SK-N-SH (cell line): ENCODE measurements at regions of chr7 and their contacts with region 1.

Region 1: GRCh38 chr7:36291387-36292316 is 98.0 kb upstream of the ANLN start:
- DNase-seq: peak; percentile 93
- H3K4me3 ChIP-seq: peak overlapping the region; percentile 18 to 37; a peak in 3 of 4 replicates
- H3K27ac ChIP-seq: peak overlapping the region in 1 of 2 experiments; percentile 1; a peak in 1 of 4 replicates
- H3K4me1 ChIP-seq: peaks cover 4 to 14% of the 10 kb centered on the region in 2 experiments; a peak in 1 of 4 replicates
- H3K27me3 ChIP-seq: no peaks in the 10 kb centered on the region
- CTCF ChIP-seq: peak; percentile 100
- EP300 ChIP-seq: no peak
- RAD21 ChIP-seq: peak; percentile 100

Region 2: GRCh38 chr7:35985126-35985754 is 306.4 kb before region 1 on chr7:
- CTCF ChIA-PET with region 1: interaction called, 369 read pairs
- POLR2A ChIA-PET with region 1: interaction called, 7 read pairs
- DNase-seq: peak; percentile 96
- H3K4me3 ChIP-seq: no peak overlapping the region; a peak in 1 of 4 replicates
- H3K27ac ChIP-seq: no peak overlapping the region
- H3K4me1 ChIP-seq: no peaks in the 10 kb centered on the region; a peak in 1 of 4 replicates
- H3K27me3 ChIP-seq: no peaks in the 10 kb centered on the region
- CTCF ChIP-seq: peak; percentile 100
- EP300 ChIP-seq: no peak
- RAD21 ChIP-seq: peak; percentile 100

Region 3: DNA sequence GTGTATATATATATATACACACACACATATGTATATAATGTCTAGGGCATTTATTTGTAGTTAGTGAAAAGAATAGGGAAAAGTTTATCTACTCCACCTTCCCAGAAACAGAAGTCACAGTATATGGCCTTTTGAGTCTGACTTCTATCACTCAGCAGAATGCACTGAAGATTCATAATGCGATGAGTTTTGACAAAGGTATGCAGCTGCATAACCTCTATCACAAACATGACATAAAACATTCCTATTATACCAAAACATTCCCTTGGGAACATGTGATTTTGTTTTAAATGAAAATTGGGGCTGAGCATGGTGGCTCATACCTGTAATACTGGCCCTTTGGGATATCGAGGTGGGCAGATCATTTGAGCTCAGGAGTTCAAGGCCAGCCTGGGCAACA is 275.9 kb before region 1 on chr7:
- CTCF ChIA-PET with region 1: interaction called, 19 read pairs
- POLR2A ChIA-PET with region 1: no interaction called
- DNase-seq: no peak
- H3K4me3 ChIP-seq: no peak overlapping the region
- H3K27ac ChIP-seq: no peak overlapping the region
- H3K4me1 ChIP-seq: peaks cover 0 to 5% of the 10 kb centered on the region in 2 experiments; a peak in 1 of 4 replicates
- H3K27me3 ChIP-seq: no peaks in the 10 kb centered on the region
- CTCF ChIP-seq: no peak
- EP300 ChIP-seq: peak in 1 of 2 experiments; percentile 20; a peak in 1 of 4 replicates
- RAD21 ChIP-seq: no peak

Region 4: DNA sequence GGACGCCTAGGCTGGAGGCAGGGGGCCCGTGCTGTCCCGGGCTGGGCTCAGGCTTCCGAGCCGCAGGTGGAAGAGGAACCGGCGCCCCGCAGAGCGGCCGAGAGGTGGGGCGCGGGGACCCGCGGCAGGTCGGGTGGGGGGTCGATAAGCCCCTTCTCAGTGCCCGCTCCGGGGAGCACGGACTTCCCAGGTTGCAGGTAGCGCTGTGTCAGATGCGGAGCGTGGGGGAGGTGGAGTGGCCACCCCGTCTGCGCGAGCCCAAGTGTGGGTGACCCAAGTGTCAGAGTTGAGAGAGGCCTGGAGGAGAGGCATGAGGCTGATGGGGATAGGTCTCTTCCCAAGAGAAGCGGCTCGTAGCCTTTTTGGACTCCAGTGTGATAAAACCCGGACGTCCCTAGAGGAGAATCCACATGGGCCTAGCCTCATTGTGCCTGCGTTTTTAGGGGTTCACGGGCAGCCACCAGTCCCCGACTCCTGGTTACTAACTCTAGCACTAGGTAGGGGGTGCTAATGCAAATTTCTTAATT is 138.0 kb before region 1 on chr7:
- CTCF ChIA-PET with region 1: interaction called, 28 read pairs
- POLR2A ChIA-PET with region 1: no interaction called
- DNase-seq: no peak
- H3K4me3 ChIP-seq: peak overlapping the region; percentile 87 to 93
- H3K27ac ChIP-seq: peak overlapping the region; percentile 56 to 73
- H3K4me1 ChIP-seq: peaks cover 0 to 45% of the 10 kb centered on the region in 2 experiments; a peak in 2 of 4 replicates
- H3K27me3 ChIP-seq: no peaks in the 10 kb centered on the region
- CTCF ChIP-seq: no peak
- EP300 ChIP-seq: no peak
- RAD21 ChIP-seq: no peak

Region 5: GRCh38 chr7:36264123-36264801 is 27.4 kb before region 1 on chr7:
- CTCF ChIA-PET with region 1: interaction called, 11 read pairs
- POLR2A ChIA-PET with region 1: no interaction called
- DNase-seq: peak; percentile 21
- H3K4me3 ChIP-seq: no peak overlapping the region
- H3K27ac ChIP-seq: peak overlapping the region in 1 of 2 experiments; percentile 16; a peak in 1 of 4 replicates
- H3K4me1 ChIP-seq: peaks cover 0 to 18% of the 10 kb centered on the region in 2 experiments; a peak in 2 of 4 replicates
- H3K27me3 ChIP-seq: no peaks in the 10 kb centered on the region
- CTCF ChIP-seq: no peak
- EP300 ChIP-seq: no peak
- RAD21 ChIP-seq: no peak

Region 6: GRCh38 chr7:36303202-36304098 is 11.8 kb after region 1 on chr7:
- CTCF ChIA-PET with region 1: interaction called, 97 read pairs
- POLR2A ChIA-PET with region 1: no interaction called
- DNase-seq: peak; percentile 97
- H3K4me3 ChIP-seq: no peak overlapping the region
- H3K27ac ChIP-seq: peak overlapping the region; percentile 61 to 94
- H3K4me1 ChIP-seq: peaks cover 26 to 50% of the 10 kb centered on the region in 2 experiments
- H3K27me3 ChIP-seq: no peaks in the 10 kb centered on the region
- CTCF ChIP-seq: no peak
- EP300 ChIP-seq: peak; percentile 59 to 87; a peak in 3 of 4 replicates
- RAD21 ChIP-seq: 0 out of 2 replicates have a peak, but pooled peaks have one; percentile 10

Region 7: DNA sequence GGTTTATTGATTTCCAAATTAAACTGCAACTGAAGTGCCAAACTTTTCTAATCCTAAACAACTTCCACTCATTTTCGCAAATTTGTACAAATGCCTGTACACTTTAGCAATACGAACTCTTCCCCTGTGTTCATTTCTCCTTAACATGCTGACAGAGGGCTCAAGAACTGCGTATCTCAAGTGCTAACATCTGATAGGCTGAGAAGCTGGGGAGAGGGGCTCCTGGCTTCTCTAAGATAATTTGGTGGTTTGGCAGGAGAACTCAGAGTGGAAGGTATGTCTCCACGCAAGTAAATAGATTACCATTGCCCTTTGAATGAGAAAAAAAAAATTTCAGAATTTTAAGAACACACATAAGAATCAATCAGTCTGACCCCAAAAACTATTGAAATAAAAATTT is 44.7 kb after region 1 on chr7:
- CTCF ChIA-PET with region 1: interaction called, 11 read pairs
- POLR2A ChIA-PET with region 1: no interaction called
- DNase-seq: no peak
- H3K4me3 ChIP-seq: no peak overlapping the region
- H3K27ac ChIP-seq: no peak overlapping the region
- H3K4me1 ChIP-seq: no peaks in the 10 kb centered on the region
- H3K27me3 ChIP-seq: no peaks in the 10 kb centered on the region
- CTCF ChIP-seq: no peak
- EP300 ChIP-seq: no peak
- RAD21 ChIP-seq: no peak